Activated CD8-positive, alpha-beta T cell treated with anti-CD3 and anti-CD28 coated beads, Interleukin-2, amount 10 ng/mL, durations not matched to agents 7 days and 5 days (primary cell): ENCODE measurements at regions of chr13 and their contacts with region 1.

Region 1: GRCh38 chr13:27424246-27425157 is at the start of gene GTF3A:
- DNase-seq: peak; percentile 85
- ATAC-seq: peak; percentile 73
- H3K4me3 Mint-ChIP-seq: peak within 1 kb of the TSS; percentile 84
- H3K27ac Mint-ChIP-seq: peak within 1 kb of the TSS; percentile 92
- H3K4me1 Mint-ChIP-seq: peaks cover 33% of the 10 kb centered on the region
- H3K27me3 Mint-ChIP-seq: no peaks in the 10 kb centered on the region
- total RNA-seq, gene GTF3A: 227 to 233 TPM

Region 2: GRCh38 chr13:27339299-27339698 is 85.2 kb before region 1 on chr13:
- CTCF ChIA-PET with region 1: no interaction called
- POLR2A ChIA-PET with region 1: no interaction called
- DNase-seq: peak; percentile 60
- ATAC-seq: peak; percentile 73
- H3K4me3 Mint-ChIP-seq: no peak overlapping the region
- H3K27ac Mint-ChIP-seq: no peak overlapping the region
- H3K4me1 Mint-ChIP-seq: no peaks in the 10 kb centered on the region
- H3K27me3 Mint-ChIP-seq: peaks cover 3% of the 10 kb centered on the region

Region 3: DNA sequence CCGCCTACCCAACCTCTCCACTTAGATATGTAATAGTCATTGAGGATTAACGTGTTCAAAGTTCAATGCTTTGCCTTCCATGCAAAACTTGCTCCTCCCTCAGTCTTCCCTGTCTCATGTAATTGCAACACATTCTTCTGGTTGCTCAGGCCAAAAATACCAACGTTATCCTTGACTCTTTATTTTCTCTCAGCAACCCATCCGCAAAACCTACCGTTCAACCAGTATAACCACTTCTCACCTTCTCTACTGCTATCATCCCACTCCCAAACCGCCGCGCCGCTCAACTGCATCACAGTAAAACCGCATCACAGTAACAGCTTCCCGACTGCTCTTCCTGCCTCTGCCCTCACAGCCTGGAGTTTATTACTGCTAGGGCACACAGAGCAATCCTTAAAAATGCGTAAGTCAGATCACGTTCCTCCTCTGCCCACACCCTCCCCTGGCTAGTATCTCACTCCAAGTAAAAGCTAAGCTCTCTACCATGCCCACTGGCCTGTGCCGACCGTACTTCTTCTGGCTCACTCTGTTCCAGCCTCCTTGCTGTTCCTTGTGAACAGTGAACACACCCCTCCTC is 17.7 kb after region 1 on chr13:
- CTCF ChIA-PET with region 1: interaction called, 36 read pairs
- POLR2A ChIA-PET with region 1: interaction called, 156 read pairs
- DNase-seq: no peak
- ATAC-seq: peak; percentile 49
- H3K4me3 Mint-ChIP-seq: peak overlapping the region; percentile 36
- H3K27ac Mint-ChIP-seq: peak overlapping the region; percentile 68
- H3K4me1 Mint-ChIP-seq: peaks cover 61% of the 10 kb centered on the region
- H3K27me3 Mint-ChIP-seq: no peaks in the 10 kb centered on the region

Region 4: DNA sequence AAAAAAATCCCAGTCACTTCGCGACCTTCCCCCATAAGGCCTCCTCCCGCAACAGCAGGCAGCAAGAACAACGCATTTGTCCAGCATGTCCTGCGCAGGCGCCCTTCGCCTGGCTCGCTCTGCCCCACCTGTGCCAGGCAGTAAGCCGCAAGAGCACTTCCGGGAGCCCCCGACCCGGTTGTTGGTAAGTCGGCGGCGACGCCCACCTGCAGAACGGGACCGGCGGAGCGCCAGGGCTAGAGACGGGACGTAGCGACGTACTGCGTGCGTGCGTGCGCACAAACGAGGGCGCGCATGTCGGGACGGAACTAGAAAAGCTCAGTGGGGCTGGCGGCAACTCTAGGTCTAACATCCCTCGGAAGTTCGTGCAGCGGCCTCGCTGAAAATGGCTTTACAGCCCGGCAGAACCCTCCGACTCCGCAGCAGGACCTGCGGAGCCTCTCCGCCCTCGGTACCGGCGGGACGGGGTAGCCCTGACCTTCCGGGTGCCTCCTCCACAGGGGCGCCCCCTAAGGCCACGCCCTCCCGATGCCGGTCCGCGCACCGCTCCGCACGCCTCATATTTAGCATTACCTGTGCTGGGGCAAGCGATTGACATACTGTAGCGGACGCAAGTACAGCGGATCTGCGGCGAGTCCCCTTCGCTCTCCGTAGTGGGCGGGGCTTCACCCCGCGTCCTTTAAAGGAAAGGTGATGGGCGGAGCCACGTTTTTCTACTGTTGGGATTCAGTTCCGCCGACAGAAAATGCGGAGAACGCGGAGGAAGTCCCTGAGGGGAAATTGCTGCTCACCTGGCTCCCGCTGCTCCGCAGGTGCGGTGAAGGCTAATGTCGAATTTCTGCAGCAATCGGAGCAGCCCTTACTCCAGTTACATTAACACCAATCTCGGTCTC is 25.7 kb after region 1 on chr13 and contains the start of gene MTIF3:
- CTCF ChIA-PET with region 1: interaction called, 36 read pairs
- POLR2A ChIA-PET with region 1: interaction called, 156 read pairs
- DNase-seq: peak; percentile 98
- ATAC-seq: peak; percentile 93
- H3K4me3 Mint-ChIP-seq: peak within 1 kb of the TSS; percentile 91
- H3K27ac Mint-ChIP-seq: peak within 1 kb of the TSS; percentile 93
- H3K4me1 Mint-ChIP-seq: peaks cover 55% of the 10 kb centered on the region
- H3K27me3 Mint-ChIP-seq: no peaks in the 10 kb centered on the region
- total RNA-seq, gene MTIF3: 39.9 to 44.7 TPM

Region 5: DNA sequence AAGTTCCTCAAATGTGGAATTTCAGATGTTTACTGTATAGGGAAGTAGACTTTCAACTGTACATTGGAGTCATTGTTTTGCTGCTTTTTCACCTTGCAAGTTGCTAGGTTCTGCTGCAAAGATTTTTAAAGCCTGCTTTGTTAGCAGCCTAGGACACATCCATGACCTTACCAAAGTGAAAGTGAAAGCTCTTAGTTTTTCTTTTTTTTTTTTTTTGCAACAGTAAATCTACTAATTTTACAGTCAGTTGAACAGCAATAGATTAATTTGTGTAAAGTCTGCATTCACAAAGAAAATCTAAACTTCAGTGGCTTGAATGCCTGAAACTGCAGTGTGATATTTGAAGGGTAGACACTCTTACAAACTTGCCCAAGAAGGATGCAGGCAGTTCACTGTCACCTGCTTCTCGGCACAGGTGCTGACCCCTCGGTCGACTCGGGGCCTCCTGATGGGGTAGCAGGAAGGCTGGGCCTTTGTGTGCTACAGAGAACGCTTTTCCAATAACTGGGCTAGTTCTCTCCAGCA is 30.9 kb after region 1 on chr13:
- CTCF ChIA-PET with region 1: interaction called, 36 read pairs
- POLR2A ChIA-PET with region 1: interaction called, 156 read pairs
- DNase-seq: no peak
- ATAC-seq: peak; percentile 50
- H3K4me3 Mint-ChIP-seq: peak overlapping the region; percentile 85
- H3K27ac Mint-ChIP-seq: peak overlapping the region; percentile 98
- H3K4me1 Mint-ChIP-seq: peaks cover 32% of the 10 kb centered on the region
- H3K27me3 Mint-ChIP-seq: no peaks in the 10 kb centered on the region

Region 6: DNA sequence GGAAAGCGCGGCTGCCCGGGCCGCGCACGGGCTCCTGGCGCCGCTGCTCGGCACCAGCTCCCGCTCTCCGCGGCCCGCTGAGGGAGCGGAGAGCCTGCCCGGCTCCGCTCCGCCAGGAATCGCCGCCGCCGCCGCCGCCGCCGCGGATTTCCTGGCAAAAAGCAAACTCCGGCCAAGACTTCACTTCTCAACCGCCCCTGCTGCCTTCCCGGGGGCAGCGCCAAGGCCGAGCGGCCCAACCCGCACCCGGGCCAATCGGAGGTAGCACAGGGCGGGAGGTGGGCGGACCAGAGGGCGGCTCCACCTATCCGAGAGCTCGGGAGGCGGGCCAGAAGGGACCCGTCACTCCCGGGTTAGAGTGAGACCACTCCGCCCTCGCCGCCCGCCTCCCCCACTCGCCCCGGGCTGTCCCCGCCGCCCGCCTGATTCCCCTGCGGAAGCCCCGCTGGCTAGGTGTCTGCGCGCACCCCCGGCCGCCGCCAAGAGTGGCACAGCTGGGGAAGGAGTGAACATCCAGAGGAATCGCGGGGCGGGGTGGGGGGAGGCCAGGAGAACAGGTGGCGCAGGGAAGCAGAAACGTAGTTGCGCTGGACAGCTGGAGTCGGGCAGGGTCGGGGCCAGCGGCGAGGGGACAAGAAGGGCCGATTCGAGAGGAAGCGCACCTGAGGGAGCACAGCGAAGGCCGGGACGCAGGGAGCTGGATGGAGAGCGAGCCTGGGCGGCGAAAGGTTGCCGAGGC is 196.0 kb after region 1 on chr13 and contains the start of gene LNX2:
- CTCF ChIA-PET with region 1: no interaction called
- POLR2A ChIA-PET with region 1: interaction called, 19 read pairs
- DNase-seq: peak; percentile 97
- ATAC-seq: peak; percentile 92
- H3K4me3 Mint-ChIP-seq: peak within 1 kb of the TSS; percentile 92
- H3K27ac Mint-ChIP-seq: peak within 1 kb of the TSS; percentile 91
- H3K4me1 Mint-ChIP-seq: peaks cover 50% of the 10 kb centered on the region
- H3K27me3 Mint-ChIP-seq: no peaks in the 10 kb centered on the region
- total RNA-seq, gene LNX2: 7.1 to 7.6 TPM